GM10248 (cell line): ENCODE measurements at regions of chr12 and their contacts with region 1.

Region 1: DNA sequence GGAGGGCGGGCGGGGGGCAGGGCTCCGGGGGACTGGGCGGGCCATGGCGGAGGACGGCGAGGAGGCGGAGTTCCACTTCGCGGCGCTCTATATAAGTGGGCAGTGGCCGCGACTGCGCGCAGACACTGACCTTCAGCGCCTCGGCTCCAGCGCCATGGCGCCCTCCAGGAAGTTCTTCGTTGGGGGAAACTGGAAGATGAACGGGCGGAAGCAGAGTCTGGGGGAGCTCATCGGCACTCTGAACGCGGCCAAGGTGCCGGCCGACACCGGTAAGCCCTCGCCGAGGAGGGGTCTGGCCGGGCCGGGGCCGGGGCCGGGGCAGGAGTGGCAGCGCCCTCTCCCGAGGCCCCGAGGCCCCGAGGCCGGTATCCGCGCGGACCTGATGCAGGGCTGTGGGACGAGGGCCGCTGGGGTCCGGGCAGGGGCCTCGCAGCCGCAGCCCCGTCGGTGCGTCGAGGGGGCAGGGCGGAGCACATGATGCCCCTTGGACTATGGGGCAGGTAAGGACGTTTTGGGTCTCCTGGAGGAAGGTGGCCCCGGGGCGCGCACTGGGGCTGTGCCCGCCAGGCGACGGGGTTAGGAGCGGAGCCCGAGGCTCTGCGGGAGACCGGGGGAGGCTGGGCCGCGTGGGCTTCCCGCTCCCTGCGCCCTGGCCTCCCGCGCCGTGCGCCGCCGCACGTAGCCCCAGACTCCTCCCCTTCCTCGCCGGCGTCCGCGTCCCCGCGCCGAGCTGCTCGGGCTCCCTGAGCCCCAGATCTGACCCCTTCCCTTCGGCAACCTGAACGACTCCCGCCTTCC is at the start of gene TPI1:
- DNase-seq: peak; percentile 96
- CTCF ChIP-seq: no peak

Region 2: DNA sequence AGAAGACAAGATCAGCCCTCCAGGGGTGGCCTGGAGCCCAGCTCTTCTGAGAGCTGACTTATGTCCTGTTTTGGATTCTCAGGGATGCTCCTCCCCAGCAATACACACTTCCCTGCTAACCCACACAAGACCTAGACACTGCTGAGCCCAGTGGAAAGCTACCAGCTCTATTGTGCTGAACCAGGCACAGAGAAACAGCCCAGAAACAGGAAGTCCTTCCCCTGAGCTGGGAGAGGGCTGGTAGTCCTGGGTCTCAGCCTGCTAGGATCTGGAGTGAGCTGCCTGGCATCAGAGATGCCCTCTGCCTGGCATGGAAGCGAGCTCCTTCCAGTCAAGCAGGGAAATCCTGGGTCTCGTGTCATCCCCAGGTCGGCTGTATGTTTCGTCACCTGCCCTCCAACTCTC is 96.5 kb before region 1 on chr12:
- CTCF ChIA-PET with region 1: interaction called, 5 read pairs
- POLR2A ChIA-PET with region 1: interaction called, 10 read pairs
- DNase-seq: no peak
- CTCF ChIP-seq: no peak

Region 3: GRCh38 chr12:6851921-6852650 is 15.5 kb before region 1 on chr12 and contains the start of gene USP5:
- CTCF ChIA-PET with region 1: interaction called, 130 read pairs
- POLR2A ChIA-PET with region 1: interaction called, 89 read pairs
- DNase-seq: peak; percentile 95
- CTCF ChIP-seq: no peak

Region 4: DNA sequence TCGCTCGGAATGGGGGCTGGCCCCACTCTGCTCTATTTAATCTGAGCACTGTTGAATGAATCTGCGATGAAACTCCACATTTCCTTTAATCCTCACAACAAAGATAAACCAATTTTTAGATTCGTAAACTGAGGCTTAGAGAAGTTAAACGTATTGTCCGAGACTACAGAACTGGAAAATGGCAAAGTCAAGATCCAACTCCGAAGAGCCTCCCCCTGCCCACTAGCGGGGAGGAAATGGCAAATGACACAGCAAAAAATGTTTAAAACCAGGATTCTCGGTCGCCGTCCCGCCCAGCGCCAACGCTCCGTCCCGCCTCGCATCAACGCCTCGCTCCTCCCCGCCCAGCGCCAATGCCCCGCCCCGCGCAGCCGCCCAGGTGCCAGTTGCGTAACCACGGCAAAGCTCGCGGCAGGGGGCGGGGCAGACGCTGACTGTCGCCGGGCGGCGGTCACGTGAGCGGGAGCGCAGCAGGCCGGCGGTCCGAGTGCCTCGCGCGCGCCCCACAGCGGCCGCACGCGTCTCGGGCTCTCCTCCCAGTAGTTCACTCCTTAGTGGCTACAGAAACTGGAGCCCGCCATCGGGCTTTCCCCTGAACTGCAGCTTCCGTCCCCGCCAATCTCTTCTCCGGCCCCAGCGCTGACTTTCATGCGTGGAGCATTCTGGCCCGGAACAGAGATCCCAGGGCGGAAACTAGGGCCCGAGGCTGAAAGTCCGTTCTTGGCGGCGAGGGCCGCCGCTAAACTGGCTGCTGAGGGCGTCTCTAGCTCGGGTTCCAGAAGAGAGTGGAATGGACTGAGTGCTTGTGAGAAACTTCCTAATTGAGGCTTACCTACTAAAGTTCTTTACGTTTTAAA is 23.4 kb after region 1 on chr12:
- CTCF ChIA-PET with region 1: interaction called, 50 read pairs
- POLR2A ChIA-PET with region 1: interaction called, 21 read pairs
- DNase-seq: peak; percentile 98
- CTCF ChIP-seq: peak; percentile 85

Region 5: GRCh38 chr12:6953442-6954315 is 86.1 kb after region 1 on chr12:
- CTCF ChIA-PET with region 1: interaction called, 5 read pairs
- POLR2A ChIA-PET with region 1: interaction called, 11 read pairs
- DNase-seq: peak; percentile 80
- CTCF ChIP-seq: no peak

Region 6: GRCh38 chr12:7042842-7043241 is 175.2 kb after region 1 on chr12:
- CTCF ChIA-PET with region 1: no interaction called
- POLR2A ChIA-PET with region 1: no interaction called
- DNase-seq: no peak
- CTCF ChIP-seq: peak; percentile 15

Region 7: DNA sequence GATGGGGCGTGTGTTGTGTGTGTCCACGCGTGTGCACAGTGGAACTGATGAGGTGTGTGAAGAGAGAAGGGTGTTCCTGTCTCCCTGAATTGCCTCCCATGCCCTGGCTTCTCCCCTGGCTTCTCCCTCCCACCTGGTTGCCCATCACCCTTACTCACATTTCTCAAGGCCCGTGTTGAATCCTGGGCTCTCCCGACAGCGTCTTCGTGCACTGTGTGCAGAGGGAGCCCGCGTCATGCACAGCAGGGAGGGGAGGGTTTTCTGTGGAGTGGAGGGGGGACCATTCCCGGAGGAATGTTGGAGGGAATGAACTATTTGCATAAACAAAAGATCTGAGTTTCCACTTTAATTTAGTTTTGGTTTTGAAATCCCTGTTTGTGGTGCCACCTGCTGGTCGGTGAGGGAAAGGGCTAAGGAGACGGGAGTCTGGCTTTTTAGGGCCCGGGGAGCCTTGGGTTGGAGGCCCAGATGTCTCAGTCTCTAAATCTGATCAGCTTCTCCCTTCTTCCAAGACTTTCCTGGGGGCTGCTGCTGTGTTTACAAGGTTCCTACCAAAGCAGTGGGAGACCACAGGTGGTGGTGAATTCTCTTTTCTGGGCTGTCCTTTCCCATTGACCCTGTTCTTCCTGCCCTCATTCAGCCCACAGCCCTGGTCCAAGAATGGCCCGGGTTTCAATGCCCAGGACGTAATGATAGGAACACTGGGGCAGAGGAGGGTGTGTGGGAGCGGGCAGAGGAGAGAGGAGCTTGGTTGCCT is 224.8 kb after region 1 on chr12 and contains the start of gene C1R:
- CTCF ChIA-PET with region 1: no interaction called
- POLR2A ChIA-PET with region 1: no interaction called
- DNase-seq: peak; percentile 82
- CTCF ChIP-seq: peak; percentile 91

Region 8: DNA sequence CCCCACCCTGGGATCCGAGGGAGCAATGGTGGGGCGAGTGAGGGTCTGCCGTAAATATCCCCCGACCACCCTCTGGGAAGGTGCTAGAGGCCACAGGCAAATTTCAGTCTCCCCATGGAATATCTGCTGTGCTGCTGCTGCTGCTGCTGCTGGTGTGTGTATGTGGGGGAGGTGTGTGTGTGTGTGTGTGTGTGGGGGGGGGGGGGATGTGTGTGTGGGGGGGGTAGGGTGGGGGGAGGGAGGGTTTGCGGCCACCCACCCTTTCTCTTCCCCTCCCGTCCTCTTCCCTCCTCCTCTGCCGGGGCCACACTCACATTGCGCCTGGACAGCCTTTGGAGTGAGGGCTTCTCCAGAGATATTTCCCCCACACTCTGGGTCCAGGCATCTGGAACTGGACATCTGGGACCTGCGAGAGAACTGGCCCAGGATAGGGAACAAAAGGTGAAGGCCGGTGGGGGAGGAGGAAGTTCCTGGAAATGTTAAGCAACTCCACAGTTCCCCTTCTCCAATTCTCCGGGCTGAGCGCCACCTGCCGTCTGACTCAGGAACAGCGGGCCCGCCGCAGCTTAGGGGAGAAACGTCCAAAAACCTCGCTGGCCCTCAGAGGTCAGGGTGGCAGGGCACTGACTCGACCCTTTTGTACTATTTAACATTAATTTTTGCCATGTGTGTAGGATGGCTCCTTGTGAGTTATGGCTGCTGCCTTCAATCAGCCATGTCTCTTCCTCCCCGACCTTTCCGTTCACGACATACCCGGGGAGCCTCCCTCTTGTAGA is 241.4 kb after region 1 on chr12 and contains the start of gene C1RL:
- CTCF ChIA-PET with region 1: interaction called, 13 read pairs
- POLR2A ChIA-PET with region 1: interaction called, 9 read pairs
- DNase-seq: peak; percentile 76
- CTCF ChIP-seq: peak; percentile 98